ENCODE measurements at regions of chr12 and their contacts with region 1.

Region 1: DNA sequence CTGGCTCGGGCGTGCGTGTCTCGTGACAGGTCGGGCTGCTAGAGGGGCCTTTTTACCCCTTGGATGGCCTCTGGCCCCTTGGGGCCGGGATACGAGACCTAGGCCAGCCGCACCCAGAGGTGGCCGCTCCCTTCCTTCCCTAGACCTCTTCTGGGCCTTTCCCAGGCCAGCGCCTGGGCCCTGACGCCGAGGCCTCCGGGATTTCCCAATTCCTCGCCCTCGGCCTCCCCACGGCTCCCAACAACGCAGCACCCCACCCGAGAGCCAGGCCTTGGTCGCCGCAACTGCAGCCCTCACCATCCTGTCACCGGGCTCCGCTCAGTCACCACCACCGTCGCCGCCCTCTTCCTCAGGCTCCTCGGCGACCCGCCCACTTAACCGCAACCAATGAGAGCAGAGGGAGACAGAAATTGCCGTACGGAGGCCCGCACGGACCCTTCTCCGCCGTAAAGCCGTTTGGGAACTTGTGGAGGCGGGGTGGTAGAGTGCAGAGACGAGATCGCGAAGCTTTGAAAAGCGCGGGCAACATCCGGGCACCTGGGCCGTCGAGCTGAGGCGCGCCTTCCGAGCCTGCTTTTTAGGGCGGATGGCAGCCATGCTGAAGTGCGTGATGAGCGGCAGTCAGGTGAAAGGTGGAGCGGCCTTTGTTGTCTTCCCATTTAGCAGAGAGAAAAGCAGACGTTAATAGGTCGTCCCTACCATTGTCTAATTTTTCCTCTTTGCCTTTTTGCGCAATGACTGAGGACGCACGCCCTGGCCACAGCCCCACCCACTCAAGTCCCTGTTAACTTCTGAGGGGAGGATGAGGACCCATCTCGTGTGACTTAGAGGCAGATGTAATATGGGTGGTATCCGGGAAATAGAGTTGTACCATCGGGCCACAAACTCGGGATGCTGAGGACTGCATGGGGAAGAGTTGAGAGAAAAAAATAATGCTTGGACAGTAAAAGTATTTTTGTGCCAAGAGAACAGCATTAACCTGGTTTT is at the starts of genes RAD9B and VPS29:
- DNase-seq: peak; percentile 96 to 100 (median 99)
- ATAC-seq: peak; percentile 93 to 96 (median 95)
- H3K4me3 ChIP-seq: peak within 1 kb of the TSS; percentile 74 to 88
- H3K4me3 Mint-ChIP-seq: peak within 1 kb of the TSS; percentile 90 to 99 (median 97)
- H3K27ac ChIP-seq: peak within 1 kb of the TSS; percentile 86
- H3K27ac Mint-ChIP-seq: peak within 1 kb of the TSS; percentile 98
- H3K4me1 ChIP-seq: peaks cover 20% of the 10 kb centered on the region in 2 experiments
- H3K4me1 Mint-ChIP-seq: peaks cover 38 to 45% (median 41%) of the 10 kb centered on the region in 3 donors
- H3K27me3 ChIP-seq: no peaks in the 10 kb centered on the region
- H3K27me3 Mint-ChIP-seq: no peaks in the 10 kb centered on the region
- total RNA-seq, gene RAD9B: 0.18 to 1.6 (median 0.74) TPM in 4 of 5 donors, not detected in the other
- total RNA-seq, gene VPS29: 79.0 to 109 (median 95.4) TPM

Region 2: DNA sequence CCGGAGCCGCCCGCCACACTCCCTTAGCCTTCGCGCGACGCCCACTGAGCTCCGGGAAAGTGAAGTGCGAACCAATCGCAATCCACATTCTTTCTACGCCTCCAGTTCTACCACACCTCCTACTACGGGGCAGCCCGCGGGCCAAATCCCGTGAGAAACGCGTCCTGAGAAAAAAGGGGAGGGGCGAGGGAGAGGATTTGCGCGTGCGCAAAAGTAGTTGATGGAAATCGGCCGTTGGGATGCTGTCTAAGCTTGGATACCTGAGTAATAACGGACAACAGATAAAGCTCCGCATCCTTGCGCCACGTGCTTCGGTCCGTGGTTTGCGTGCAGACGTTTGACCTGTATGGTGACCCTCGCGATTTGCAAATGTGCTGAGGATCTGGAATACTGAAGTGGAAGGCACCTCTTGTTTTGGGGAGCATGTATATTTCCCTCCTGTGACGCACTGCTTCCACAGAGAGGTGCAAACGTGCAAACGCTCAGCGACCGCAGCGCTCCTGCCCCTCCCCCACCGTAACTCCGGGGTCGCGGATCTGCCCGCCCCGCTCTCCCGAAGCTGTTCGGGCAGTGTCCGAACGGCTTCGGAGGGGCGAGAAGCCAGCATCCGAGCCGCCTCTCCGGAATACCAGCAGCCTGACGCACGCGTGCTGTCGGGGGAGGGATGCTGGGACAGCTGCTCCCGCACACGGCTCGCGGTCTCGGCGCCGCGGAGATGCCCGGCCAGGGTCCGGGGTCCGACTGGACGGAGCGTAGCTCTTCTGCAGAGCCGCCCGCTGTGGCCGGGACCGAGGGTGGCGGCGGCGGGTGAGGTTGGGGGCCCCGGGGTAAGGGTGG is 33.6 kb before region 1 on chr12 and contains the starts of genes FAM216A and GPN3:
- CTCF ChIA-PET with region 1: interaction called in 1 of 2 experiments, 30 read pairs
- POLR2A ChIA-PET with region 1: no interaction called
- DNase-seq: peak; percentile 90 to 97 (median 93)
- ATAC-seq: peak; percentile 84 to 90 (median 86)
- H3K4me3 ChIP-seq: peak within 1 kb of the TSS; percentile 84 to 91
- H3K4me3 Mint-ChIP-seq: peak within 1 kb of the TSS; percentile 81 to 97 (median 97)
- H3K27ac ChIP-seq: peak within 1 kb of the TSS; percentile 81
- H3K27ac Mint-ChIP-seq: peak within 1 kb of the TSS; percentile 90 to 93
- H3K4me1 ChIP-seq: peaks cover 10 to 26% of the 10 kb centered on the region in 2 experiments
- H3K4me1 Mint-ChIP-seq: peaks cover 30 to 44% (median 41%) of the 10 kb centered on the region in 3 donors
- H3K27me3 ChIP-seq: no peaks in the 10 kb centered on the region
- H3K27me3 Mint-ChIP-seq: no peaks in the 10 kb centered on the region
- total RNA-seq, gene FAM216A: 6.3 to 16.5 (median 13.2) TPM
- total RNA-seq, gene GPN3: 6.3 to 19.1 (median 13.4) TPM

Region 3: GRCh38 chr12:110555577-110556406 is 53.7 kb after region 1 on chr12:
- CTCF ChIA-PET with region 1: interaction called in 1 of 2 experiments, 10 read pairs
- POLR2A ChIA-PET with region 1: no interaction called
- DNase-seq: no peak
- ATAC-seq: no peak
- H3K4me3 ChIP-seq: no peak overlapping the region
- H3K4me3 Mint-ChIP-seq: no peak overlapping the region
- H3K27ac ChIP-seq: no peak overlapping the region
- H3K27ac Mint-ChIP-seq: peak overlapping the region in 1 of 2 donors; percentile 1
- H3K4me1 ChIP-seq: peaks cover 10 to 33% of the 10 kb centered on the region in 2 experiments
- H3K4me1 Mint-ChIP-seq: peaks cover 63 to 66% (median 64%) of the 10 kb centered on the region in 3 donors
- H3K27me3 ChIP-seq: no peaks in the 10 kb centered on the region
- H3K27me3 Mint-ChIP-seq: no peaks in the 10 kb centered on the region

Region 4: GRCh38 chr12:110718222-110718908 is 216.3 kb after region 1 on chr12:
- CTCF ChIA-PET with region 1: no interaction called
- POLR2A ChIA-PET with region 1: no interaction called
- DNase-seq: no peak
- ATAC-seq: no peak
- H3K4me3 ChIP-seq: no peak overlapping the region
- H3K4me3 Mint-ChIP-seq: no peak overlapping the region
- H3K27ac ChIP-seq: no peak overlapping the region
- H3K27ac Mint-ChIP-seq: peak overlapping the region in 1 of 2 donors; percentile 37
- H3K4me1 ChIP-seq: no peaks in the 10 kb centered on the region
- H3K4me1 Mint-ChIP-seq: peaks cover 0 to 9% (median 0%) of the 10 kb centered on the region in 3 donors
- H3K27me3 ChIP-seq: no peaks in the 10 kb centered on the region
- H3K27me3 Mint-ChIP-seq: no peaks in the 10 kb centered on the region

Measured in T-cell (primary cell).